AG04449 (cell line): ENCODE measurements at regions of chr17 and their contacts with region 1.

Region 1: DNA sequence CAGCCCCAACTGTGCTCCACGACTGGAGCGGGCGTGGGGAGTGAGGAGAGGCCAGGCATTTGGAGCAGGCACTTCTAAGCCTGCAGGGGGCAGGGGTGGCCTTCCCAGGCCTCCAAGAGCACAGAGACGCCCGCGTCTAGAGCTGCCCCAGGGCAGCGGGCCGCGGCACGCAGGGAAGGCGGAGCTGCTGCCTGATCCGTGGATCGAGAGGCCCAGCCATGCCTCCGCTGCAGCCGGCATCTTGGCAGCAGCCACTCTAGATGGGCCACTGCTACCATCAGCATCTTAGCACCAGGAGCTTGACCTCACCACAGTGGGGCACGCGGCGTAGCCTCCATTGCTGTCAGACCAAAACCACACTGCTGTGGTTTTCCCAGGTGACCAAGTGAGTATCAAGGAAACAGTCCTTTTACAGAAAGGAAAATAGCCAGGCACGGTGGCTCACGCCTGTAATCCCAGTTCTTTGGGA is 20.4 kb upstream of the WDR45B start:
- DNase-seq: no peak
- H3K4me3 ChIP-seq: 0 out of 2 replicates have a peak overlapping the region, but pooled peaks have one; percentile 3
- CTCF ChIP-seq: peak; percentile 70

Region 2: DNA sequence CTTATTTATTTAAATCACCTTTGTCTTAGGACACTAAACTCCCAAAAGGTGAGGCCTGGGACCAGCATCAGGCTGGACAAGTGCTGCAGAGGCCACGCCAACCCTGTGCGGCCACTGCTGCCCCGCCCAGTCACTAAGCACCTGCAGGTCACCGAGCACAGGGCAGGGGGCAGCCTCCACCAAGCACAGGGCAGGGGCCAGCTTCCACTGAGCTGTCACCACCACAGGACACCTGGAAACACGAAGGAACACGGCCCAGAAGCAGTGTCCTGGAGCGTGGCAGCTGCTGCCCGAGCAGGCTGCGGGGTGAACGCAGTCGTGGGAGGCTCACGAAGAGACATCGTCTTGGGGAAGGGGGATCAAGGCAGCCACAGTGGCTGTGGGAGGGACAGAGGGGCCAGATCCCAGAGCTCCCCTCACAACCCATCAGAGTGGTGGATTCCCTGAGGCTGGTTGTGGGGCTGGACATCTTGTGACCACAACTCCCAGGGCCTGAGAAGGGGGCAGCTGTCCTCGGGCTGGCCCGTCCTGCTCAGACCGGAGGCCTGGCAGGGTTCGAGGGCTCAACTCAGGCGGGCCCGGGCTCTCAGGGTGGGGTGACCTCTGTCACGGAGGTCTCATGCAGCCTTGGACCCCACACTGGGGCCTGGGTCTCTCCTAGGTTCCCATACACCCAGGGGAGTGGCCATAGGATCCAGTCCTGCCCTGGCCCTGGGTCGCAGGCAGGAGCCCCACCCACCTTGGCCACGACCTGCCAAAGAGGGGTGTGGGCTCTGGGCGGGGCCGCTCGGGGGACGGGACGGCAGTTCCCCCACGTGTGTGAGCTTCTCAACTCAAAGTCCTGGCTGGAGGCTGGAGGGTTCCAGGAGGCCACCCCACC is 11.2 kb after region 1 on chr17:
- CTCF ChIA-PET with region 1: interaction called, 16 read pairs
- POLR2A ChIA-PET with region 1: no interaction called
- DNase-seq: no peak
- H3K4me3 ChIP-seq: no peak overlapping the region
- CTCF ChIP-seq: no peak

Region 3: DNA sequence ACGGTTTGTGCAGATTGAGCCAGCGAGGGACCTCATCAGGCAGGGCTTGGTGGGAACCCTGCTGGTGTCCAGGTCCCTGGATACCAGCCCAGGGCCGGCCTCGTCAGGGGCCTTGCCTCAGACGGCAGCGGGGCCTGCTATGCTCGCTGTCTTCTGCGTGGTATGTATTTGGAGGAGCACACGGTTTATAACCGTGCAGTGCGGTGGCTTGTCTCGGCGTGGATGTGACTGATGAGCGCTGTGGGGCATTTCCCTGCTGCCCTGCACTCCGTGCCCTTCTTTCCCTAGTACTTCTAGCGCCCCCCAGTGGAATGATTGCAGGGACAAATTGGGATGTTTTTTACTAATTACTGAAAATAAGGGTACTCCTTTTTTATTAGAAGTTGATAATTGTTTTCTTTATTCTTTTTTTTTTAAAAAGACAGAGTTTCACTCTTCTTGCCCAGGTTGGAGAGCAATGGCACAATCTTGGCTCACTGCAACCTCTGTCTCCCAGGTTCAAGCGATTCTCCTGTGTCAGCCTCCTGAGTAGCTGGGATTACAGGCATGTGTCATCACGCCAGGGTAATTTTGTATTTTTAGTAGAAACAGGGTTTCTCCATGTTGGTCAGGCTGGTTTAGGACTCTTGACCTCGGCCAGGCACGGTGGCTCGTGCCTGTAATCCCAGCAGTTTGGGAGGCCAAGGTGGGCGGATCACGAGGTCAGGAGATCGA is 98.5 kb after region 1 on chr17:
- CTCF ChIA-PET with region 1: interaction called, 19 read pairs
- POLR2A ChIA-PET with region 1: no interaction called
- DNase-seq: no peak
- H3K4me3 ChIP-seq: no peak overlapping the region
- CTCF ChIP-seq: peak; percentile 44

Region 4: GRCh38 chr17:82775001-82775823 is 106.5 kb after region 1 on chr17:
- CTCF ChIA-PET with region 1: interaction called, 51 read pairs
- POLR2A ChIA-PET with region 1: no interaction called
- DNase-seq: no peak
- H3K4me3 ChIP-seq: no peak overlapping the region
- CTCF ChIP-seq: peak; percentile 93